Endothelial cell of umbilical vein (primary cell): ENCODE measurements at regions of chr11 and their contacts with region 1.

Region 1: GRCh38 chr11:108985945-108986279 is 321.0 kb downstream of the DDX10 start:
- DNase-seq: peak; percentile 88
- H3K4me3 ChIP-seq: peak overlapping the region in 1 of 3 experiments; percentile 12
- H3K27ac ChIP-seq: peak overlapping the region; percentile 84
- H3K4me1 ChIP-seq: peaks cover 24% of the 10 kb centered on the region
- H3K27me3 ChIP-seq: no peaks in the 10 kb centered on the region
- CTCF ChIP-seq: no peak
- POLR2A ChIP-seq: no peak

Region 2: GRCh38 chr11:108937746-108938145 is 48.2 kb before region 1 on chr11:
- CTCF ChIA-PET with region 1: no interaction called
- POLR2A ChIA-PET with region 1: no interaction called
- dilution Hi-C with region 1: no loop called
- intact Hi-C with region 1: no loop called
- DNase-seq: no peak
- H3K4me3 ChIP-seq: no peak overlapping the region
- H3K27ac ChIP-seq: no peak overlapping the region
- H3K4me1 ChIP-seq: no peaks in the 10 kb centered on the region
- H3K27me3 ChIP-seq: no peaks in the 10 kb centered on the region
- CTCF ChIP-seq: no peak
- POLR2A ChIP-seq: no peak

Region 3: DNA sequence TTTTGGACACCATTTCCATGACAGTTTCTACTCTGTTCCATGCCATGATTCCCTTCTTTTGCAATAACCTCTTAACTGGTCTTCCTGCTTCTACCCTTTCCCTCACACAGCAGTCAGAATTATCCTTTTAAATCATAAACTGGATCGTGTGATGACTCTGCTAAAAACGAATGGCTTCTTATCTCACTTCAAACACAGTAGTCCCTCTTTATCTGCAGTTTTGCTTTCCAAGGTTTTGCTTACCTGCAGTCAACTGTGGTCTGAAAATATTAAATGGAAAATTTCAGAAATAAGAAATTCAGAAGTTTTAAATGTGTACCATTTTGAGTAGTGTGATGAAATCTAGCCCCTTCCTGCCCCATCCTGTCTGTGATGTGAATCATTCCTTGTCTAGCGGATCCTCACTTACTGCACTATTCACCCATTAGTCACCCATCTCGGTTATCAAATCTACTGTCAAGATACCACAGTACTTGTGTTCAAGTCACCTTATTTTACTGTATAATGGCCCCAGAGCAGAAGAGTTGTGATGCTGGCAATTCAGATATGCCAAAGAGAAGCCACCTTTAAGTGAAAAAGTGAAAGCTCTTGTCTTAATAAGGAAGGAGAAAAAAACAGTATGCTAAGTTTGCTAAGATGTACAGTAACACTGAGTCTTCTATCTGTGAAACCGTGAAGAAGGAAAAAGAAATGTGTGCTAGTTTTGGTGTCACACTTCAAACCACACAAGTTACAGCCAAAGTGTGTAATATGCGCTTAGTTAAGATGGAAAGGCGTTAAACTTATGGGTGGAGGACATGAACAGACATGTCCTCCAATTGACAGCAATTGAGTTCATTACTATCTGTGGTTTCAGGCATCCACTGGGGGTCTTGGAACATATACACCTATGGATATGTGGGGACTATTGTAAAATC is 38.0 kb before region 1 on chr11:
- CTCF ChIA-PET with region 1: no interaction called
- POLR2A ChIA-PET with region 1: no interaction called
- dilution Hi-C with region 1: no loop called
- intact Hi-C with region 1: no loop called
- DNase-seq: peak; percentile 18
- H3K4me3 ChIP-seq: no peak overlapping the region
- H3K27ac ChIP-seq: no peak overlapping the region
- H3K4me1 ChIP-seq: peaks cover 3% of the 10 kb centered on the region
- H3K27me3 ChIP-seq: no peaks in the 10 kb centered on the region
- CTCF ChIP-seq: no peak
- POLR2A ChIP-seq: no peak

Region 4: GRCh38 chr11:108958368-108959104 is 27.4 kb before region 1 on chr11:
- CTCF ChIA-PET with region 1: no interaction called
- POLR2A ChIA-PET with region 1: no interaction called
- dilution Hi-C with region 1: no loop called
- intact Hi-C with region 1: loop called (anchors 1 kb)
- DNase-seq: peak; percentile 54
- H3K4me3 ChIP-seq: no peak overlapping the region
- H3K27ac ChIP-seq: peak overlapping the region; percentile 23
- H3K4me1 ChIP-seq: peaks cover 21% of the 10 kb centered on the region
- H3K27me3 ChIP-seq: no peaks in the 10 kb centered on the region
- CTCF ChIP-seq: no peak
- POLR2A ChIP-seq: no peak

Region 5: DNA sequence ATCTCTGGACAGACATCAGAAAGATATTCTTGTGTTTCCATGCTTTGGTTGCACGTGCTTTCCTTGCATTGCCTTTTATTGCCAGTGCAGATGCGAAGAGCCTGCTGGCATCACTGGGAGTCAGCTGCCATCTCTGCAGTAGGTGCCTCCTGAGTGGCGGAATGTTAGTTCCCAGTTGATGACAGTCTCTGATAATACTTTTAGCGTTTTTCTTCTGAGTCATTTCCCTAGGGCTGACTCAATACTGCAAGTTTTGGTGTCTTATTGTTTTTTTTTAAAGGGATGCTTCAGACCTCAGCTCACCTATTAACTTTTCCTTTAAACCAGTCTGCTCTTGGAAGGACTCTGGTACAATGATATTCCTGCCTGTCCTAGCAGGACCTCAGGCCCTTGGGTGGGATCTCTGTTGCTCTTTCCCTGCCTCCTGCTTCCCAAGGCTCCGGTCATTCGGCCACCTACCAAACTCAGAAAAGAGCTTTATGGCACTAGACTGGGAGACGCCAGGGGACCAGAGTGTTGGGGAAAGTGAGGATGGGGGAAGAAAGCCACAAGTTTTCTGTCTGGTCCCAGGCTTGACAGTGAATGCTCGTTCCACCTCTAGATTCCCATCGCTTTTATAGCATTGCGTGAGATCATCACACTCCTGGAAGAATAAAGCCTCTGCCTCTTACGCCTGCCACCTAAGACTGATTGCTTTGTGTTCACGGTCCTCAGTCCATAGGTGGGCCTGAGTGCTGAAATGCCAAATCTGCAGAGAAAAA is 12.3 kb before region 1 on chr11:
- CTCF ChIA-PET with region 1: interaction called, 3 read pairs
- POLR2A ChIA-PET with region 1: no interaction called
- dilution Hi-C with region 1: no loop called
- intact Hi-C with region 1: loop called (anchors 1 kb)
- DNase-seq: peak; percentile 71
- H3K4me3 ChIP-seq: no peak overlapping the region
- H3K27ac ChIP-seq: peak overlapping the region; percentile 42
- H3K4me1 ChIP-seq: peaks cover 14% of the 10 kb centered on the region
- H3K27me3 ChIP-seq: no peaks in the 10 kb centered on the region
- CTCF ChIP-seq: no peak
- POLR2A ChIP-seq: no peak

Region 6: GRCh38 chr11:109015283-109015682 is 29.4 kb after region 1 on chr11:
- CTCF ChIA-PET with region 1: interaction called, 4 read pairs
- POLR2A ChIA-PET with region 1: no interaction called
- dilution Hi-C with region 1: no loop called
- intact Hi-C with region 1: loop called (anchors 2 kb)
- DNase-seq: peak; percentile 64
- H3K4me3 ChIP-seq: no peak overlapping the region
- H3K27ac ChIP-seq: peak overlapping the region; percentile 51
- H3K4me1 ChIP-seq: peaks cover 14% of the 10 kb centered on the region
- H3K27me3 ChIP-seq: no peaks in the 10 kb centered on the region
- CTCF ChIP-seq: no peak
- POLR2A ChIP-seq: no peak

Region 7: GRCh38 chr11:109037856-109038780 is 52.2 kb after region 1 on chr11:
- CTCF ChIA-PET with region 1: interaction called, 5 read pairs
- POLR2A ChIA-PET with region 1: no interaction called
- dilution Hi-C with region 1: no loop called
- intact Hi-C with region 1: loop called (anchors 2 kb)
- DNase-seq: peak; percentile 85
- H3K4me3 ChIP-seq: no peak overlapping the region
- H3K27ac ChIP-seq: peak overlapping the region; percentile 21
- H3K4me1 ChIP-seq: peaks cover 44% of the 10 kb centered on the region
- H3K27me3 ChIP-seq: no peaks in the 10 kb centered on the region
- CTCF ChIP-seq: no peak
- POLR2A ChIP-seq: no peak